ENCODE measurements at regions of chr15 and their contacts with region 1.

Region 1: GRCh38 chr15:60916679-60917460 is 312.2 kb downstream of the RORA start:
- DNase-seq: peak; percentile 79
- H3K4me3 ChIP-seq: no peak overlapping the region
- H3K27ac ChIP-seq: peak overlapping the region; percentile 16 to 34
- H3K4me1 ChIP-seq: peaks cover 3% of the 10 kb centered on the region
- H3K27me3 ChIP-seq: no peaks in the 10 kb centered on the region
- CTCF ChIP-seq: peak; percentile 73 to 80 (median 78)
- POLR2A ChIP-seq: no peak

Region 2: DNA sequence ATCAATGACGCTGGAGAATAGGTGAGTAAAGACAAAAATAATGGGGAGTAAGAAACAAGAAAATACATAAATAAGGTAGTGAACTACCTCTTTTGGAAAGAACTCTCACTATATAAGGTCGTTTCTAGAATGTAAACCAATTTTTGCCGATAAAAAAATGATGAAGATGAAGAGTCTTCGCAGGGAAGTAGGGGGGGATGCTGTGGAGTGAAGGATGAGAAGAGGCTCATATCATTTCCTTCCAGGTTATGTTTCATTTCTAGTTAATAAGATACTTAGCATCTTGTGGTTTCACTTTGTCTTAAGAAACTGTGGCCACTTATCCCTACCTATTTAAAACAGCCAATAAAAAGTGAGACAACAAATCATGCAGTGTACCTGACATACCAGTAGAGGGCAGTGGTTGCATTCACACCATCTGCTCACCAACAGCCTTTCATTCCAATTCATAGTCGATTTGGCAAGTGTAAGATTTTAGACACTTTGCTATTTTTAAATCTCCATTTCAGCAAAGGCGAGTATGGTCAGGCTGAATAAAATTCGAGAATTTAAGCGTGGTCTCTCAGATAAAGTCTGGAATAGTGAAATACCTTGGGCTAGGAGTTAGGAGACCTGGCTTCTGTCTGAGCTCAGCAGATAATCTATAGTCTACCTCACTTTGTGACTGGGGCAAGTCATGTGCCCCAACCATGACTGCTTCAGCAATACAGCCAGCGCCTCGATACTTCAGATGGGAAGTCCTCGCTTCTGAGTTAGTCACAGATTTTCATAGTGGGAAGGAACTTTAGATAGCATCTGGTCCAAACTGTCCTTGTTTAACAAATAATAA is 409.1 kb before region 1 on chr15:
- intact Hi-C with region 1: loop called (anchors 10 kb)
- DNase-seq: peak; percentile 42
- H3K4me3 ChIP-seq: no peak overlapping the region
- H3K27ac ChIP-seq: no peak overlapping the region
- H3K4me1 ChIP-seq: no peaks in the 10 kb centered on the region
- H3K27me3 ChIP-seq: no peaks in the 10 kb centered on the region
- CTCF ChIP-seq: peak; percentile 86 to 89 (median 88)
- POLR2A ChIP-seq: no peak

Region 3: GRCh38 chr15:60591496-60592370 is 325.1 kb before region 1 on chr15:
- intact Hi-C with region 1: loop called (anchors 2 kb)
- DNase-seq: peak; percentile 27
- H3K4me3 ChIP-seq: peak overlapping the region; percentile 82 to 94
- H3K27ac ChIP-seq: peak overlapping the region; percentile 96
- H3K4me1 ChIP-seq: no peaks in the 10 kb centered on the region
- H3K27me3 ChIP-seq: no peaks in the 10 kb centered on the region
- CTCF ChIP-seq: peak in 1 of 4 experiments; percentile 23
- POLR2A ChIP-seq: no peak

Region 4: GRCh38 chr15:61834076-61834697 is 917.3 kb after region 1 on chr15:
- intact Hi-C with region 1: loop called (anchors 10 kb)
- DNase-seq: peak; percentile 75
- H3K4me3 ChIP-seq: no peak overlapping the region
- H3K27ac ChIP-seq: no peak overlapping the region
- H3K4me1 ChIP-seq: no peaks in the 10 kb centered on the region
- H3K27me3 ChIP-seq: no peaks in the 10 kb centered on the region
- CTCF ChIP-seq: peak; percentile 87 to 95 (median 94)
- POLR2A ChIP-seq: no peak